ENCODE measurements at regions of chr3 and their contacts with region 1.

Region 1: DNA sequence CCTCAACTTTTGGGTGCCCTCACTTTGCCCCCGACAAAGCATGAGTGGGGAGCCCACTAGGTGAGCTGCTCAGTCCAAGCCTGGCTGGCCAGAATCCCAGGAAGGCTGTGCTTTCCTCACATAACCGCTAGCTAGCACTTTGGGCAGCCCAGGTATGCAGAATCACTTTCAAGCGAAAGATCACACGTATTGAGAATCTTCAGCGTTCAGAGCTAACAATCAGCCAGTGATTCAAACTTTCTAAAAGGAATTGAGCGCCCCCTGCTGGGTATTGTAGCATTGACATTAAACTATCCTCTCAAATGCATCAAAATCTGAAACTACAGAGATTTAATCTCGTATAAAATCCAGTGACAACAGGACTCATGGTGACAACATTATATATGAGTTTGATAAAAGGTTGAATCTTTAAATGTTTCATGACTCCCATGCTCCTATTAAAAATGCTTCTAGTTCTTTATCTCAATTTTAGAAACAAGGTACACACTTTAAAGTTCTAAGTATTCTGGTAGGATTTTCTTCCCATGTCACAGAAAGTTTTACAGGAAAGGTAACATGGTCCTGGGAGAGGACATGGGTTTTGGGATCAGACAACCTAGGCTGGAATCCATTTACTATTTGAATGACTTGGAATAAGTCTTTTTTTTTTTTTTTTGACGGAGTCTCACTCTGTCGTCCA is 11.8 kb downstream of the ANAPC13 start:
- DNase-seq: no peak
- H3K4me3 ChIP-seq: no peak overlapping the region
- H3K27me3 ChIP-seq: no peaks in the 10 kb centered on the region
- CTCF ChIP-seq: peak; percentile 61

Region 2: DNA sequence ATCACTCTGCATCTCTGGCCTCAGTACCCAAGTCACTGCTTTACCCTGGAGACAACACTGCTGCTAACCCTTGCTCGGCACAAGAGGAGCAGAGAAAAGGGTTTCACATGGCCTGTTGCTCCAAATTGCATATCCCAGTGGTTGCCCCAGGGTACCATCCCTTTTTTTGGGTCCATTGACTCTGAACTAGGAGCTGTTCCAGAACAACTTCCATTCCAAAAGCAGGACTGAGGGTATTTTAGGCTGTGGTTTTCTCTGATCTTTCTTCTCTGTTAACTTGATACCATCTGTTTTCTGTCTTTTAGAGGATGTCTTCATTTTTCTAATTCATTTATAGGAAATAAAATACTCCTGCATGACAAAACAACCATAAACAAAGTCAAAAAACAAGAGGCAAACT is 206.0 kb before region 1 on chr3:
- CTCF ChIA-PET with region 1: no interaction called
- POLR2A ChIA-PET with region 1: no interaction called
- DNase-seq: no peak
- H3K4me3 ChIP-seq: no peak overlapping the region
- H3K27me3 ChIP-seq: peaks cover 8% of the 10 kb centered on the region; the same call in 1 of the 2 replicates
- CTCF ChIP-seq: no peak

Region 3: DNA sequence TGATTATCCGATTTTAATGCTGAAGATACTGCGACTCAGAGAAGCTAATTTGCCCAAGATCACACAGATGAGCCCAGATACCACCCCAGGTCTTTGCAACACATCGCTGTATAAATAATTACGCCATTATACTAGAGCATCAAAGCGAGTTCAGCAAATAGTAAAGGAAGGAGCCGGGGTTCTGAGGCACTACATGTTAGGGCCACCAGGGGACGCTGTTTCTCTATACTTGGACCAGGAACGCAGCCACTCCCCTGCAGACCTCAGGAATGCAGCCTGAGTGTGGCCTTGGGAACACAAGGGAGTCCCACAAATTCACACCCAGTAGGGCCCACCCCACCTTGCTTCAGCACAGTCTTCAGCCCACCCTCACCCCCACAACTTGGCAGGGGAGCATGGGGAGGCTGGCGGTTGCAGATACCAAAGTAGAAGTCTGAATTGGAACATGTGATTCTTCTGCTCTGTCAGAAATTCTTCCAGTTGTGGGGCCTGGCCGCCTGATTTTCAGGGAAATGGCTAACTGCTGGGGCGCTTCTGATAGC is 165.6 kb before region 1 on chr3:
- CTCF ChIA-PET with region 1: interaction called, 185 read pairs
- POLR2A ChIA-PET with region 1: interaction called, 5 read pairs
- DNase-seq: no peak
- H3K4me3 ChIP-seq: no peak overlapping the region
- H3K27me3 ChIP-seq: no peaks in the 10 kb centered on the region
- CTCF ChIP-seq: peak; percentile 99

Region 4: GRCh38 chr3:134357261-134358184 is 116.5 kb before region 1 on chr3:
- CTCF ChIA-PET with region 1: interaction called, 10 read pairs
- POLR2A ChIA-PET with region 1: interaction called, 3 read pairs
- DNase-seq: peak; percentile 96
- H3K4me3 ChIP-seq: no peak overlapping the region
- H3K27me3 ChIP-seq: no peaks in the 10 kb centered on the region
- CTCF ChIP-seq: no peak

Region 5: DNA sequence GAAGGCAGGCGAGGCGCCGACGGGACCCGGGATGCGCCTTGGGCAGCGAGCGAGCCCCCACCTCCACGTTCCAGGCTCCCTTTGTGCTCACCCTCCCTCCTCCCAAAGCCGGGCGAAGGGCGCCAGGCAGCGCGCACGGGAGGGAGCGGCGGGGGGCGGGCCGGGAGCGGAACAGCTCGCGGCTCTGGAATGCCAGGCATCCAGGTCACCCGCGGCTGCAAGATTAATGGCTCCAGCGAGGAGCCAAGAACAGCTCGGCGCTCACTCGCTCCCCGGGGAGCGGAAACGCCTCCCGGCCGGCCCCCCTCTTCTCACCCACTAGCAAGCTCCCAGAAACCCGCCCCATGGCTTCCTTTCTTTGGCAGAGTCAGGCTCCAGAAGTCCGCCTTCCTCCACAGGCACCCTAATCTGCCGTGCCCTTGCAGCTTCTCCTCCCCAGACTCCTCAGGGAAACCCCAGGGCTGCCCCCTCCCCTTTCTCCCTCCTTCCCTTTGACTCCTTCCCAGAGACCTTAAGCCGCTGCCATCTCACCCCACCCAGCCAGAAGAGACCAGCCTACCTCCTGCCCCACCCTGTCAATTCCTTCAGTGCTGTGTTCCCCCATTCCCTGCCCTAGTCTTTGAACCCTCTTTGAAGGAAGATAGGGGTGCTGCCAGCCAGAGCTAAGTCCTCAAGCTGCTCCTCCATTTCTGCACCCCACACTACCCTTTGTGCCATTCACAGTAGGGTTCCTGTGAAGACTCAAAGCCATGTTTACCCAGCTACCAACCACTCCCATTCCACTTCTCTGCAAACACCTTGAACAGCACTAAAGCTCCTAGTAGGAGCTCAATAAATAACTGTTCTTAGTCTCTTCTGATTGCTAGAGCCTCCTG is 109.7 kb before region 1 on chr3:
- CTCF ChIA-PET with region 1: interaction called, 12 read pairs
- POLR2A ChIA-PET with region 1: interaction called, 11 read pairs
- DNase-seq: peak; percentile 89
- H3K4me3 ChIP-seq: peak overlapping the region; percentile 24
- H3K27me3 ChIP-seq: no peaks in the 10 kb centered on the region
- CTCF ChIP-seq: no peak

Region 6: DNA sequence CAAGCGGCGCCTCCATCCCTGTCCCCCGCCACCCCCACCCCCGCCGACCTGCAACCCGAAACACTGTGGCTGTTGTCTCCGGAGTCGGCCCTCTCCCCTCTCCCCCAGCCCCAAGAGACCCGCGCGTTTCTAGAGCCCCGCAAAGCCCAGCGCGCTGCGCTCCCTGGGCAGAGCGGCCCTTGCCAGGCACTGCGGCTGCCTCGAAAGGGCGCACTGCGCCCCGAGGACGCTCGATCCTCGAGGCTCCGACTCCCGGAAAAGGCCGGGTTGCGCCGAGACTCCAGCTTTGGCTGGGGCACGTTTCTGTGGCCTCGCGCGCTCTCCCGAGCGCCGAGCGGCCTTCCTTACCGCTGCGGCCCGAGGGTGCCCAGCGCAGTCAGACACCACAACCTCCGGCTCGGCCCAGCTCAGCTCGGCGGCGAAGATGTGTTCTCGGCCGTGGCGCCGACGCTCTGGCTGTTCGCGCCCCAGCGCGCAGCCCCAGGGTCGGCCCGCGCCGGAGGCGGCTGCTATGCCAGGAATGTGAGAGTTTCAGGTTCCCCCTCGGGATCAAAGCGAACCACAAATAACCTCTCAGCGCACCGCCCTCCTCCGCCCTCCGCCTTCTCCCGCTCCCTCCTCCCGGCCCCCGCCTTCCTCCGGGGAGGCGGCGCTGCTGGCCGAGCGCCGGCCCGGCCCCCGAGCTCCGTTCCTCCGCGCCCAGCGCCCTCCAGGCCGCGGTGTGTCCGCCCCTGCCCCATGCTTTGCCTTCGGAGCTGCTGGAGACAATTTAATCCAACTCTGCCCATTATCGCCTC is 99.8 kb before region 1 on chr3 and contains the start of gene AMOTL2:
- CTCF ChIA-PET with region 1: interaction called, 11 read pairs
- POLR2A ChIA-PET with region 1: interaction called, 10 read pairs
- DNase-seq: peak; percentile 86
- H3K4me3 ChIP-seq: peak within 1 kb of the TSS; percentile 97
- H3K27me3 ChIP-seq: no peaks in the 10 kb centered on the region
- CTCF ChIP-seq: no peak
- polyA plus RNA-seq, gene AMOTL2: 122 and 199 TPM in 2 replicates

Region 7: GRCh38 chr3:134406331-134407238 is 67.4 kb before region 1 on chr3:
- CTCF ChIA-PET with region 1: no interaction called
- POLR2A ChIA-PET with region 1: no interaction called
- DNase-seq: no peak
- H3K4me3 ChIP-seq: peak overlapping the region; percentile 15
- H3K27me3 ChIP-seq: 0 out of 2 replicates have a peak, but pooled peaks cover 2% of the 10 kb centered on the region
- CTCF ChIP-seq: no peak

Region 8: GRCh38 chr3:134449277-134449676 is 24.7 kb before region 1 on chr3:
- CTCF ChIA-PET with region 1: interaction called, 13 read pairs
- POLR2A ChIA-PET with region 1: no interaction called
- DNase-seq: no peak
- H3K4me3 ChIP-seq: no peak overlapping the region
- H3K27me3 ChIP-seq: no peaks in the 10 kb centered on the region
- CTCF ChIP-seq: peak; percentile 50

Region 9: DNA sequence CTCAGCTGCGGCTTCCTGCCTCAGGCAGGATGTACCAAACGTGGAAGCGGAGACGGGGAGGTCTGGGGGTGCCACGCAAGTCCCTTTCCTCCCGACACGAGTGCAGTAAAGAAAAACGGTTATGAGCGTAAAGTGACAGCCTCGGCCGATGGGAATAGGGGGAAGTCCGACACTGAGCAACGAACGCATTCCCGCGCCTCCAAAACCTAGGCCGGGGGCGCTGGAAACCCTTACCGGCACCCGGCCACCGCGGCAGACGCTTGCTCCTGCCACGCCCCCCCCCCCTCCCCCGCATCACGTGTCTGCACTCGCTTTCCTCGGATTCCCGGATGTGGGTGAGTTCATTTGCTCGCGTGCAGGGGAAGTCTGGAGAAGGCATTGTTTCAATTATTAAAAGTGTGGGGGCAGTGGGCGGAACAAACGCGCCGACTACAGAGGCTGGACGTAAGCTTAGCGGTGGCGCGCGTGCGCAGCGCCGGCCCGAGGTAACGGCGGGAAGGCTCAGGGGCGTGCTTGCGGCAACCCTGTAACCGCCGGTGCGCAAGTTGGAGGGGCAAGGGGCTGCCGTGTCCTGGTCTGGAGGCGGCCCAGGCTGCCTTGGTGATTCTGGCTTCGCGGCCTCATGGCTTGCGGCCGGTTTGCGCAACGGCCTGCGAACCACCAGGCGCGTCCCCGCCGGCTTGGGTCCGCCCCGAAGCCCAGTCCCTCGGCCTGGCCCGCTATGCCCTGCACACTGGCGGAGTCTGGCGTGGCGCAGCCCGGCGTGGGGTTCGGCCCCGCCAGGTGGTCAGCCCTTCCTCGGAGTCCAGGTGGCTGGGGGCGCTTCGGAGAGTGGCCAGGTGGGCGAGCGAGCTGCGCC is 11.9 kb after region 1 on chr3 and contains the starts of genes ANAPC13 and CEP63:
- CTCF ChIA-PET with region 1: interaction called, 25 read pairs
- POLR2A ChIA-PET with region 1: no interaction called
- DNase-seq: peak; percentile 98
- H3K4me3 ChIP-seq: peak within 1 kb of the TSS; percentile 85
- H3K27me3 ChIP-seq: no peaks in the 10 kb centered on the region
- CTCF ChIP-seq: no peak
- polyA plus RNA-seq, gene ANAPC13: 54.6 and 115 TPM in 2 replicates
- polyA plus RNA-seq, gene CEP63: 6.4 and 14.5 TPM in 2 replicates

Region 10: DNA sequence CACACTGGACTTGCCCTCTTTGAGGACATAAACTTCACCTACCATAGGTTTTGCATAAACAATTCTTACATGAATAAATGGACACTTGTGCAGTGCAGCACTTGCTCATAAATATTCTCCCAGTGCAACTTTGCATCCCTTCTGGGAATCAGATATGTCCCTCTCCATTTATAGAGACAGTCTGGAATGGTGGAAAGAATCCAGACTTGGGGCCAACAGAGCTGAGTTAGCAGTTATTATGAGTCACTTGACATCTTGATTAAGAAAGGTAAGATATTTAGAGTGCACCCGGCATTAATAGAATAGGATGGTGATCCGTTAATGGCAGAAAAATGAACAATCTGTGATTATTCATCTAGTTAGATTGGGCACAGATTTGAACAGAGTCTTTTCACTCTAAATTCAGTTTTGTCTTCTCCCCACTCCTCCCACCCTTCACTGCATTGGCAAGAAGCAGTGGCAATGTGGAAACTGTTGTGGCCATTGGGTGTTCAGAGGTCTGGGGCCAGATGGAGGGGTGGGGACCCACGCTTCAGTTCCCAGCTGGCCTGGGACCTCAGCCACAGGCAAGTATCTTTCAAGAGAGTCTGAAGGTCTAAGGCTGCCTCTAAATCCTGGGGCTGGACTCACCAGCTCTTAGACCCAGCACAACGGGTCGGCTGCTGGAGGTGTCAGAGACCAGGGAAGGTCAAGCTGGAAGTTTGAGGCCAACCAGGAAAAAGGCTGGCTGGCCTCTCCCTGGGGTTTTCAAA is 235.7 kb after region 1 on chr3:
- CTCF ChIA-PET with region 1: no interaction called
- POLR2A ChIA-PET with region 1: no interaction called
- DNase-seq: no peak
- H3K4me3 ChIP-seq: no peak overlapping the region
- H3K27me3 ChIP-seq: no peaks in the 10 kb centered on the region
- CTCF ChIP-seq: no peak